ENCODE measurements at regions of chr18 and their contacts with region 1.

Region 1: DNA sequence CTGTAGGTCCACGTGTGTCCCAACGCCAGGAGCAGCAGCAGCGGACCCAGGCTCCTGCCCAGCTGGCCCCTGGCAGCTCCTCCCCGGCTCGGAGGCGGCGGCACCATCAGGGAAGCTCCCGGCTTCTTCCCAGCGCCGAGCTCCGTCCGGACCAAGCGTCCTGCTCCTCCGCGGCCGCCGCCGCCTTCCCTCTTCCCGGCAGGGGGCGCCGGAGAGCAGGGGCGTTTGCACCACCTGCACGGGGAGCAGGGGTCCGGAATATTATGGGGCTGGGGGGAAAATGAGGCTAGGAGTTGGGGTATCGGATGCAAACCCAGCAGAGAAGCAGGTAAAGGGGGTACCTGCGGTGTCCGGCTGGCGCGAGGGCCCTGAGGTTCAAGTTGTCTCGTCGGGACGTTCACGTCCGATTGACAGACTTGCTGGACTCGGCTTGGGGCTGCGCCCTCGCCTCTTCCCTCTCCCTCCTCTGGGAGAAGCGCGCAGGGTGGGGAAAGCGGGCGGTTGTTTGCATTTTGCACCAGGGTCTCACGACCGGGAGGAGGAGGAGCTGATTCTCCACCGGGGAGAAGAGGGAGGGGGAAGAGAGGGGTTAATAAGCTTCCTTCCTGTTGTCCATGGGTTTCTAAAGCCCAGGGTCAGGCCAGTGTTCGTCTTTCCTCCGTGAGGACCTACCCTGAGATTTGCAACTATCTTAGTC is at the start of gene CCBE1:
- DNase-seq: no peak
- H3K4me3 ChIP-seq: peak within 1 kb of the TSS; percentile 94
- CTCF ChIP-seq: peak; percentile 97

Region 2: DNA sequence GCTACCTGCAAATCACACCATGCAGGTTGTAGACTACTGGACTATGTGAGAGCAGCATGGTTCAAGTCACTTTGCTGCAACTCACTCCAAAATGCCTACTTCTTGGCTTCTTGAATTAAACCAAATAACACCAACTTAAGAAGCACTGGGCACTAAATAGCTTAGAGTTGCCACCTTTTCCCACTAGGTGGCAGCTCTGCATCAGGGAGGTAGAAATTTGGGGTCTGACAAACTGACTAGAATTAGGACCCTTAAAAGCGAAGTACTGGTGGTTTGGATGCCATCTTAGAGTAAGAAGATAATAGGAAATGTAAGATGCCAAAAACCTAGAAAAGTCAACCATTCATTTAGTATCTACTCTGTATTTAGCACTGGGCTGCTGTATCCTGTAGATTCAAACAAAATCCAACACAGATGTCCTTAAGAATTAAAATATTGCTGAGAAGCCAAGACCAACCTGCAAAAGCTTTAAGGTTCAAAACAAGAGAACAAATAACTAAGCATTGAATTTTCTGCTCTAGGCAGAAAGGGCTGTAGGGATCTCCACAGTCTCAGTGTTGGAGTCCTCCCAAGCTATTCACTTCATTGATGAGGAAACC is 65.7 kb before region 1 on chr18:
- CTCF ChIA-PET with region 1: interaction called, 28 read pairs
- POLR2A ChIA-PET with region 1: no interaction called
- DNase-seq: no peak
- H3K4me3 ChIP-seq: no peak overlapping the region
- CTCF ChIP-seq: peak; percentile 59

Region 3: DNA sequence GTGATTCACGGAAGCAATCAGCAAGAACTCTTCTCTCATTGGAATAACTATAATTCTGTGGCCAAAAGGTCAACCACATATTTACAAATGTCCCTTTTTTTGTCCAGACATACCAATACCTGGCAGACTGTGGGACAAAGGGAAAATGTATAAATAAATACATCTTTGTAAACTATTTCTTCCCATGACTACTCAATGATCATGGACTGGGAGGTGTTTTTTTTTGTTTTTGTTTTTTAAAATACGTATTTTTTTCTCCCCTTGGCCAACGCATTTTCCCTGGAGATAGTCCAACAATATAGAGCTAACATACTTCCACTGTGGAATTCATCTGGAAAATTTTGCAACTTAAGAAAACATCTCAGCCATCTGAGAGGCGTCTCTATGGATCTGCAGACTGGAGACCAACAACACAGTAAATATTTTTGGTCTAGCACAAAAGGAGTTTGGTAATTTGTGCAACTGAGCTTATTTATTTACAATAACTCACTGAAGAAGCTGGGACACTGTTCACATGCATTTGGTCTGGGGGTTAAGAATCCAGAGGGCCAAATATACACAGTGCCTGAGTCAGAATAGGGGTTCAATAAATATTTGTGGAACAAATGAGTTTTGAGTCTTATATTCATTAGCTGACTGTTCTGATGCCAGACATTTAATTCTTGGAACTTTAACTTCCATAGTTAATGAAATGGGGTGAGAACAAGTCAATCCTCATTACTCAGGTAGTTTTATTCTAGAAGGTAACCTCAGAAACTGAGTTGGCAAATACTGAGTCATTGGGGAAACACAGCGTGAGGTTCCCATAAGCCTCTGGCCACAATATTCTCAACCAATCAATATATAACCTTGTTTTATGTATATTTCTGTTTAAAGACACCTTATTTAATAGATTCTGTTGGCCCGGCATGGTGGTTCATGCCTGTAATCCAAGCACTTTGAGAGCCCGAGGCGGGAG is 36.3 kb before region 1 on chr18:
- CTCF ChIA-PET with region 1: interaction called, 32 read pairs
- POLR2A ChIA-PET with region 1: interaction called, 3 read pairs
- DNase-seq: peak; percentile 80
- H3K4me3 ChIP-seq: no peak overlapping the region
- CTCF ChIP-seq: no peak

Region 4: GRCh38 chr18:59685501-59685900 is 11.9 kb before region 1 on chr18:
- CTCF ChIA-PET with region 1: interaction called, 76 read pairs
- POLR2A ChIA-PET with region 1: no interaction called
- DNase-seq: no peak
- H3K4me3 ChIP-seq: no peak overlapping the region
- CTCF ChIP-seq: no peak

Region 5: GRCh38 chr18:59725142-59725541 is 27.8 kb after region 1 on chr18:
- CTCF ChIA-PET with region 1: interaction called, 42 read pairs
- POLR2A ChIA-PET with region 1: no interaction called
- DNase-seq: no peak
- H3K4me3 ChIP-seq: no peak overlapping the region
- CTCF ChIP-seq: no peak

Region 6: DNA sequence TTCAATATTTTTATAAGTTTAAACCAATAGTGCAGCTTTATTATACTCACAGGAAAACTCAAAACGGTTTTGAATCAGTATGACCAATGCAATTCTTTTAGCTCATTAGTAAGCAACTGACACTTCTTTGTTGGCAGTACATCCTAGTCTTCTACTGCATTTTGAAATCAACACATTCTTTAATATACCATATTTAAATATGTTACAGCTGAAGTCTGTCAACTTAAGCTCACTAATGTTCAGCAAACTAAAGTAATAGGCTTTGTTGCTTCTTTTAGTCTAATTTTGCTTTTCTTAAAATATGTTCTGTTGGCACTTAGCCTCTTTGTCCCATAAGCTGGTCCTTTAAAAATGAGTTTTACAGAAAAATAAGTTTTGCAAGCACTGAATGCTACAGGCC is 55.3 kb after region 1 on chr18:
- CTCF ChIA-PET with region 1: interaction called, 13 read pairs
- POLR2A ChIA-PET with region 1: no interaction called
- DNase-seq: no peak
- H3K4me3 ChIP-seq: no peak overlapping the region
- CTCF ChIP-seq: no peak

Region 7: GRCh38 chr18:59787998-59788790 is 90.8 kb after region 1 on chr18:
- CTCF ChIA-PET with region 1: interaction called, 15 read pairs
- POLR2A ChIA-PET with region 1: no interaction called
- DNase-seq: no peak
- H3K4me3 ChIP-seq: peak overlapping the region; percentile 38
- CTCF ChIP-seq: no peak